CD4-positive, alpha-beta memory T cell (primary cell): ENCODE measurements at regions of chr6 and their contacts with region 1.

Region 1: DNA sequence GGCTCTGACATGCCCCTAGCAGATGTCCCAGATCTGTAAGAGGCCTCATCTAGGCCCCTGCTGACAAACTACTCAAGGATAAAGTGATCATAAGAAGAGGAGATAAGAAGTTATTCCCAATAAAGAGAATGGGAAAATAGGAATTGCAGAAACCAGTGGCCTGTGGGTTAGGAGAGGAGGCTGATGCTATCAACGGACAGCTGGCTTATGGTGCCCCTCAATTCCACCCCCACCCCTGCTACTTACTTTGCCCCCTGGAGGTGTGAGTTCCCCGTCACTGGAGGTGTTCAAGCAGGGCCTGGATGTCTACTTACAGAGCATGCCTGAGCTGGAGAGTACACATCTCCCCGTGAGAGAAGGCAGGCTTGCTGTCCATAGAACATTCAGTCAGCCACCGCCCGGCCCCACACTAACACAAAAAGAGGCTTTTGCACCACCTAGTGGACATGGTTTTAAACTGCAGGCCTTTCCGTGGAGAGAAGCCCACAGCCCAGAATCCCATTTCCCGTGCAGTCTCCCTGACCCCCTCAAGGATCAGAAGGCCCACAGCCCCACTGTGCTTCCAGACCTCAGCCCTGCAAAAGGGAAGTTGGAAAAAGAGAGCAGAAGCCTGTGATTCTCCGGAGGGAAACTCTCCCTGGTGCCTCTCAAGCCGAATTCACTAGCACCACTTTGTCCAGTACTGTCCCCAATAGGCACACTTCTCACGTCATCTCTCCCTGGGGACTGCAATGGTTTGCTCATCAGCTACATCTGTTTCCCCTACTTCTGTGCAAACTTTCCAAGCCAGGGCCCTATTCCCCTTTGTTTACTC is 23.8 kb upstream of the BNIP5 start:
- DNase-seq: peak; percentile 63 to 73 (median 69)
- H3K4me3 ChIP-seq: no peak overlapping the region
- H3K4me3 Mint-ChIP-seq: peak overlapping the region in 1 of 8 donors; percentile 36
- H3K27ac ChIP-seq: no peak overlapping the region
- H3K27ac Mint-ChIP-seq: no peak overlapping the region
- H3K4me1 ChIP-seq: peaks cover 7% of the 10 kb centered on the region
- H3K4me1 Mint-ChIP-seq: peaks cover 2 to 9% (median 5%) of the 10 kb centered on the region in 4 donors
- H3K27me3 ChIP-seq: no peaks in the 10 kb centered on the region
- H3K27me3 Mint-ChIP-seq: peaks cover 0 to 3% of the 10 kb centered on the region in 2 donors

Region 2: DNA sequence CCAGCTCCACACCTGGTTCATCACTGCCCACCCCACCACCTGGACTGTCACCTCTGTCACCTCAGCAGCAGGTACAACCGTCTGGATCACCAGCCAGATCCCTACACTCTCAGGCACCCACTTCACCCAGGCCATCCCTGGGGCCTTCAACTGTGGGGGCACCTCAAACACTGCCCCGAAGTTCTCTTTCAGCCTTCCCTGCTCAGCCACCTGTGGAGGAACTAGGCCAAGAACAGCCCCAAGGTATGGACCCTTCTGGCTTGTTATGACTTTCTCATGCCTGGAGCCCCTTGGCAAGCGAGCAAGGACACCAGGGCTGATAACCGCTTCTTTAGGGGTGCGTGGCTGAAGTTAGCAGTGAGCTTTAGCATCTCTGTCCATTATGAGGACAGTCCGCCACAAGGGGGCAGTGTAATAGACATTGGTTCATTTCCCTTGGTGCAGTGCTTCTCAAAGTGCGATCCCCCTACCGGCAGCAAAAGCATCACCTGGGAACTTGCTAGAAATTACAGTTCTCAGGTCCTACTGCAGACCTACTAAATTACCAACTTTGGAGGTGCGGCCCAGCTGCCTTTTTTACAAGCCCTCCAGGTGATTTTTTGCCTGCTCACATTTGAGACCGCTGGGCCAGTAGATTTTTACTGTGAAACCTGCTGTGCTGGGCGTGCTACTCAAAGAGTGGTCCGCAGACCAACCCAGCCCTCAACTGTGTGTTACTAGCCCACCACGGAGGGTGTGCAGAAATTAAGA is 58.0 kb before region 1 on chr6:
- CTCF ChIA-PET with region 1: interaction called, 9 read pairs
- POLR2A ChIA-PET with region 1: no interaction called
- intact Hi-C with region 1: loop called (anchors 1 kb)
- DNase-seq: peak; percentile 86 to 91 (median 87)
- H3K4me3 ChIP-seq: no peak overlapping the region
- H3K4me3 Mint-ChIP-seq: no peak overlapping the region
- H3K27ac ChIP-seq: no peak overlapping the region
- H3K27ac Mint-ChIP-seq: peak overlapping the region in 2 of 7 donors; percentile 30 to 32
- H3K4me1 ChIP-seq: no peaks in the 10 kb centered on the region
- H3K4me1 Mint-ChIP-seq: peaks cover 0 to 9% (median 2%) of the 10 kb centered on the region in 4 donors
- H3K27me3 ChIP-seq: no peaks in the 10 kb centered on the region
- H3K27me3 Mint-ChIP-seq: peaks cover 10 to 22% of the 10 kb centered on the region in 2 donors